ENCODE measurements at regions of chr2 and their contacts with region 1.

Region 1: DNA sequence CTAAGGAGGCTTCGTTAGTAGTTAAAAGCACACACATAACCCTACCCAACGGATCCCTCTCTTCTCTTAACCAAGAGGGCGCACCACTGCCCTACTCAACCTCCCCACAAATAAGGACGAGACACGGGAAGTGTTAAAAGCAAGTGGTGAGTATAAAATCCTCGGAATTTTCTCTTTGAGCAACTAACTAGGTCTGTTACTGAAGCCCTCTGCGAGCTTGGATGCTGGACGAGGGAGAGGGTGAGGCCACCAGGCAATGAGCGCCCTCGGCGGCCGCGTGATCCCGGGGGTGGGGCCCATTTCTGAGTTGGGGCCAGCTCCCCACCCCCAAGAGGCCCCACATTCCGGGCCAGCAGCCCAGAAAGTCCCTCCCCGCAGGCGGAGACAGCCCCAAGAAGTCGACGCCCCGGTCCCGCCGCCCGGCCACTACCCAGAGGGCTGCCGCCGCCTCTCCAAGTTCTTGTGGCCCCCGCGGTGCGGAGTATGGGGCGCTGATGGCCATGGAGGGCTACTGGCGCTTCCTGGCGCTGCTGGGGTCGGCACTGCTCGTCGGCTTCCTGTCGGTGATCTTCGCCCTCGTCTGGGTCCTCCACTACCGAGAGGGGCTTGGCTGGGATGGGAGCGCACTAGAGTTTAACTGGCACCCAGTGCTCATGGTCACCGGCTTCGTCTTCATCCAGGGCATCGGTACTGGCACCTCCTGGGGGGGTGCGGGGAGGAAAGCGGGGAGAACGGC is at the start of gene CYBRD1:
- DNase-seq: peak; percentile 93 to 97
- H3K4me3 ChIP-seq: peak within 1 kb of the TSS; percentile 94 to 100
- H3K27ac ChIP-seq: peak within 1 kb of the TSS; percentile 99
- H3K4me1 ChIP-seq: peaks cover 0 to 40% (median 8%) of the 10 kb centered on the region in 4 donors
- H3K27me3 ChIP-seq: no peaks in the 10 kb centered on the region
- CTCF ChIP-seq: peak in 1 of 2 experiments; percentile 9

Region 2: DNA sequence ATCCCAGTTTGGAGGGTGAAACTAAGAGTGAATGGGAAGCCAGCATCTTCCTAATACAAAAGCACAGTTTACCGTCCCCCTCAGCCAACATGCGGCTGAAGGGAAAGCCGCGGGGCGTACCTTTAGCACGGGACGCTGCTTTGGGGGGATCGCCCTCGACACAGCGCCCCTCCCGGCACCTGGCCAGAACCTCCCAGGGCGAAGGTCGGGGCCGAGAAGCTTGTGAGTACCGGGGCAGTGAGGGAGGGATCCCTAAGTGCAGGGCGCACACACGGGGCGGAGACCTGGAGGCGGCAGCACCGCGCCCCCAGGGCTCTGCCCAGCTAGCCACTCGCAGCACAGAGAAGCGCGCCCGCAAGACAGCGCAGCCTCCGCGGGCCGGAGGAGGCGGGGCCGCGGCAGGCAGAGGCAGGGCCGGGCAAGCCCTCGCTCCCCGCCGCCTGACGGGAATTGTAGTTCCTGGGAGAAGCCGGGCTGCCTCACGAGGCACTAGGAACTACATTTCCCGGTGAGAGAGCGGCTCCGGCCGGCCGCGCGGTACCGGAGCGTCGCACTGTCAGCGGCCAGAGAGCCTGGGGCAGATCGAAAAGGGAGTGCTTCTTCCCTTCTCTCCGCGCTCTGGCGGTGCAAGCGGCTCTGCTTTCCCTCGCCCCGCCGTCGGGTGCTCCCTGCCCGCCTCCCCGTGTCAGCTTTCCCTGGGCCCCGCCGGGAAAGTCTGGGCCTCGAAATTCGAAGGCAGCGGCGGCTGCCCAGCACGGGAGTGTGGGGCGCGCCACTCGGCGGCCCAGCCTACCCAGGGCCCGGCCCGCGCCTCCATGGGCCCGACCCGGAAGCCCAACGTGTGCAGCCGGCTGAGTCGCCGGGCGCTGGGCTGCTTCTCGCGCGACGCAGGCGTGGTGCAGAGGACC is 88.2 kb before region 1 on chr2 and contains the starts of genes DCAF17 and METTL8:
- intact Hi-C with region 1: loop called (anchors 5 kb)
- DNase-seq: peak; percentile 95 to 97
- H3K4me3 ChIP-seq: peak within 1 kb of the TSS; percentile 75 to 93
- H3K27ac ChIP-seq: peak within 1 kb of the TSS; percentile 94 to 95
- H3K4me1 ChIP-seq: peaks cover 0 to 12% (median 6%) of the 10 kb centered on the region in 4 donors
- H3K27me3 ChIP-seq: no peaks in the 10 kb centered on the region
- CTCF ChIP-seq: peak in 1 of 2 experiments; percentile 20

Region 3: GRCh38 chr2:171553858-171554257 is 31.6 kb after region 1 on chr2:
- intact Hi-C with region 1: no loop called
- DNase-seq: no peak
- H3K4me3 ChIP-seq: no peak overlapping the region
- H3K27ac ChIP-seq: no peak overlapping the region
- H3K4me1 ChIP-seq: no peaks in the 10 kb centered on the region
- H3K27me3 ChIP-seq: no peaks in the 10 kb centered on the region
- CTCF ChIP-seq: no peak

Region 4: GRCh38 chr2:171858397-171858958 is 336.3 kb after region 1 on chr2:
- intact Hi-C with region 1: no loop called
- DNase-seq: no peak
- H3K4me3 ChIP-seq: no peak overlapping the region
- H3K27ac ChIP-seq: no peak overlapping the region
- H3K4me1 ChIP-seq: peaks cover 0 to 14% (median 0%) of the 10 kb centered on the region in 4 donors
- H3K27me3 ChIP-seq: no peaks in the 10 kb centered on the region
- CTCF ChIP-seq: no peak

Measured in tibial artery (tissue), 4 donors.